ENCODE measurements at regions of chr15 and their contacts with region 1.

Region 1: DNA sequence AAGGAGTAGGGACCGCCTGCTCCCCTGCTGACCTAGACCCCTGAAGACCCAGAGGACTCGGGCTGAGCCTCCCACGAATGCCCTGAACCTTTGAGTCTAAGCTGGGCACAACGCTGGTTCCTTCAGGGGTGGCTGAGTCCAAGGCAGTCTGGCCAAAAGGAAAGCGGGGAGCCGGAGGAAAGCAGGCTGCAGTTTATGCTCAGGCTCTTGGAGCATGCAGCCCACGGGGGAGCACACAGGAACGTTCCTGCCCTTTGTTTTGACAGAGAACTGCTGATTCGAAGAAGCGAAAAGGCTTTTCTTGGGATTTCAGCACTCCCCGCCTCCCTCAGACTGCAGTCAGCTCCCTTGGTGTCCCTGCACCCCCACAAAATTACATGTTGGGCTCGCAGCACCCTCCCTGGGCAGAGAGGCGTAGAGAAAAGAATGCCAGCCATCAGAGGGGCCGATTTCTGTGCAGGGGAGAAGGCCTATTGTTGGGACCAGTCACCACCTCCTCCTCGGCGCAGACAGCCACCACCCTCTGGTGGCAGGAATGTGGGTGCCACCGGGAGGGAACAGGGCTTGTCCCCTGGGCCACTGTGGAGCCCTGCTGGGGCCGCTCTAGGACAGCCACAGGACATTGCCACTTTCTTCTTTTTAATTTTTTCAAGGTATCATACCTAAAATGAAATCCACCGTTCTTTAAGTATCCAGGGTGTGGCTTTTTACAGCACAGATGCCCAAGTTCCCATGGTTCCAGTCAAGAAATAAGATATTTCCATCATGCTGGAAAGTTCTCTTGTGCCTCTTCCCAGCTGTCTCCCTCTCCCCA is 72.2 kb downstream of the SMAD6 start:
- DNase-seq: peak; percentile 73
- H3K4me3 Mint-ChIP-seq: no peak overlapping the region
- H3K27ac Mint-ChIP-seq: no peak overlapping the region
- H3K4me1 Mint-ChIP-seq: peaks cover 2% of the 10 kb centered on the region
- H3K27me3 Mint-ChIP-seq: peaks cover 21% of the 10 kb centered on the region

Region 2: GRCh38 chr15:66603301-66604179 is 170.7 kb before region 1 on chr15:
- CTCF ChIA-PET with region 1: interaction called, 14 read pairs
- DNase-seq: peak; percentile 77
- H3K4me3 Mint-ChIP-seq: no peak overlapping the region
- H3K27ac Mint-ChIP-seq: no peak overlapping the region
- H3K4me1 Mint-ChIP-seq: peaks cover under 1% of the 10 kb centered on the region
- H3K27me3 Mint-ChIP-seq: peaks cover 41% of the 10 kb centered on the region

Region 3: DNA sequence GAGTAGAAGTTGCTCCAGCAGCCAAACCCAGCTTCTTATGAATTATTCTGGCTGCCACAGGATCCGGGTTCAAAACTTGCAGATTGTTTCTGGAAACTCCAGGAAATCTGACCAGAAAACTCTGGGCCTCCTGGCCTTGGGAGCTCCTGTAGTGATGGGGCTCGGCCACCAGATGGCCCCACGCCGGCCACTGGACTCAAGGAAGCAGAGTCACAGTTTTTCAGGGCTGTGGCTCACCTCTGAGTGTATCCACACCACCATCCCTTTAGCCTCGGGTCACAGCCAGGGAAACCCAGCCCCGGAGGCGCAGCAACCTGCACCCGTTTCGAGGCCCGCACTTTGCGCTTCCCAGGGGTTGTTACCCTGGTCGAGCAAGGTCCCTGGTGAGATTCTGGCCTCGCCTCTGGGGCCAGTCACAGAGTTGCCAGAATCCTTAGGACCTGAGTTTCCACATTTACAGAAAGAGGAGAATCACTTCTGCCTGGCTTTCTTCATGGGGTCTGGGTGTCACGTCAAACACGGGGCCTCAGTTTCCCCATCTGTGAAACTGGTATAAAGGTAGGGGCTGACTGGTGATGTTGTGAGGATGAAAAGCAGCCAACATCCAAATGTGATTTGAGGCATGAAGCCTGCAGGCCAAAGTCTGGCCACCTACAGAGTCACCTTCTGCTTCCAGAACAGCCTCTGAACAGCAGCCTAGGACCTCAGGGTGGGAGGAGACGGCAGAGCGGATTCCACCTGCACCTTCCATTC is 154.9 kb before region 1 on chr15:
- CTCF ChIA-PET with region 1: interaction called, 18 read pairs
- DNase-seq: peak; percentile 65
- H3K4me3 Mint-ChIP-seq: no peak overlapping the region
- H3K27ac Mint-ChIP-seq: no peak overlapping the region
- H3K4me1 Mint-ChIP-seq: peaks cover 12% of the 10 kb centered on the region
- H3K27me3 Mint-ChIP-seq: peaks cover 61% of the 10 kb centered on the region